Activated T-helper 1 cell treated with anti-CD3 and anti-CD28 coated beads, Interleukin-12 subunit alpha, Interleukin-12 subunit beta, Interleukin-2, Interleukin-4 antibody, amounts not matched to agents 30 ng/mL and 10 ng/mL and 1 ng/mL, durations not matched to agents 14 hours and 24 hours and 36 hours (primary cell): ENCODE measurements at regions of chr2 and their contacts with region 1.

Region 1: DNA sequence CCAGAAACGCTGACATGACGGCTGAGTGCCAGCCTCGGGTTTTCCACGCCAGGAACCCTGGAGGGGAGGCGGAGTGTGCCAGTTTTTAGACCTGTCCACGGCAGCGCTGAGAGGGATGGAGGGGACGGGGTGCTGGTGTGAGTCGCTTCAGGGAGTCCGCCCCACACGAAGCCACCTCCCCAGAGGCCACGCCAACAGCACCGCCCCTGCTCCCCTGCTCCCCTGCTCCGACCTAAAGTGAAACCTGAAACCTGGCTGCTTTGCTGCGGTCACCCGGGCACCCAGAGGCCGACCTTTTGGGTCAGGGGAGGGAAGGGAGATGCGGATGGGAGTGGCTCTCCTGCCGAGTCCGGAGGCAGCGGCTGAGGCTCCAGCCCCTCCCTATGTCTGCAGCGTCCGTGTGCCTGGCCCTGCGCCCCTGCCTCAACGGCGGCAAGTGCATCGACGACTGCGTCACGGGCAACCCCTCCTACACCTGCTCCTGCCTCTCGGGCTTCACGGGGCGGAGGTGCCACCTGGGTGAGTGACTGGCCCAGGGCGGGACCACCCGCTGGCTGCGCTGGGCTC is 38.1 kb downstream of the SNED1 start:
- DNase-seq: peak; percentile 75
- H3K4me3 Mint-ChIP-seq: peak overlapping the region; percentile 69
- H3K27ac Mint-ChIP-seq: no peak overlapping the region
- H3K4me1 Mint-ChIP-seq: peaks cover 21% of the 10 kb centered on the region
- H3K27me3 Mint-ChIP-seq: no peaks in the 10 kb centered on the region

Region 2: DNA sequence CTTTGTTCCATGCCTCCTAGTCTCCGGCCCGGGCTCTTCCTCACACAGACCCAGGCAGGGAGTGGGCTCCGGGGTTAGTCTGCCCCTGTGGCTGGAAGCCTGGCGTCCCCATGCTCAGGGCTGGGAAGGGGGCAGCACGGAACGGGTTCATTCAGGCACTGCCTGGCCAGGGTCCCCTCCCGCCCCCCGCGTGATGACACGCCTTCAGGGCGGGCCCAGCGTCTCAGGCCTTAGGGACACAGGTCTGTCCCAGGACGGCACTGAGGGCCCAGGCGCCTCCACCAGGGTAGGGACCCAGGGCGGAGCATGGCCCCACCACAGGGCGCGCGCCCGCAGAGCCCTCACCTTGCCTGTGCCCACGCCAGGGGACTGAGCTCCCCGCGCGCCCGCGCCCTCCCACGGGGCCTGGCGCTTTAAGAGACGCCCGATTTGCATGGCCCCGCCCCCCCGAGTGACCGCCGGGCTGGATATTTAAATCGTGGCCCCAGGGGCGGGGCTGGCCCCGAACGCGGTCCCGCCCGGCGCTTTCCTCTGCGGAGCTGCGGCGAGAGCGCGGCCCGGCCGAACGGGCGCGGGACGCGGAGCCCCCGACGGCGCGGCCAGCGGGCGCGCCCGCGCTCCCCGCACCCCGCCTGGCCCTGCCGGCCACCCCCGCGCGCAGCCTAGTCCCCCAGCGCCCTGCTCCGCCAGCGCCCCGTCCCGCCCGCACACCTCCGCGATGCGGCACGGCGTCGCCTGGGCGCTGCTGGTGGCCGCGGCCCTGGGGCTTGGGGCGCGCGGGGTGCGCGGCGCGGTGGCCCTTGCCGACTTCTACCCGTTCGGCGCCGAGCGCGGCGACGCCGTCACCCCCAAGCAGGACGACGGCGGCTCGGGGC is 38.1 kb before region 1 on chr2 and contains the start of gene SNED1:
- intact Hi-C with region 1: loop called (anchors 2 kb)
- DNase-seq: peak; percentile 70
- H3K4me3 Mint-ChIP-seq: peak within 1 kb of the TSS; percentile 53
- H3K27ac Mint-ChIP-seq: no peak within 1 kb of the TSS
- H3K4me1 Mint-ChIP-seq: no peaks in the 10 kb centered on the region
- H3K27me3 Mint-ChIP-seq: peaks cover 25% of the 10 kb centered on the region
- total RNA-seq, gene SNED1: 1.6 and 2.5 TPM in 2 replicates